Activated T-helper 2 cell treated with anti-CD3 and anti-CD28 coated beads, Interferon-gamma antibody, Interleukin-2, Interleukin-4, amounts not matched to agents 10 μg/mL and 5 μg/mL and 100 μg/mL, durations not matched to agents 14 hours and 24 hours and 36 hours (primary cell): ENCODE measurements at regions of chr4 and their contacts with region 1.

Region 1: DNA sequence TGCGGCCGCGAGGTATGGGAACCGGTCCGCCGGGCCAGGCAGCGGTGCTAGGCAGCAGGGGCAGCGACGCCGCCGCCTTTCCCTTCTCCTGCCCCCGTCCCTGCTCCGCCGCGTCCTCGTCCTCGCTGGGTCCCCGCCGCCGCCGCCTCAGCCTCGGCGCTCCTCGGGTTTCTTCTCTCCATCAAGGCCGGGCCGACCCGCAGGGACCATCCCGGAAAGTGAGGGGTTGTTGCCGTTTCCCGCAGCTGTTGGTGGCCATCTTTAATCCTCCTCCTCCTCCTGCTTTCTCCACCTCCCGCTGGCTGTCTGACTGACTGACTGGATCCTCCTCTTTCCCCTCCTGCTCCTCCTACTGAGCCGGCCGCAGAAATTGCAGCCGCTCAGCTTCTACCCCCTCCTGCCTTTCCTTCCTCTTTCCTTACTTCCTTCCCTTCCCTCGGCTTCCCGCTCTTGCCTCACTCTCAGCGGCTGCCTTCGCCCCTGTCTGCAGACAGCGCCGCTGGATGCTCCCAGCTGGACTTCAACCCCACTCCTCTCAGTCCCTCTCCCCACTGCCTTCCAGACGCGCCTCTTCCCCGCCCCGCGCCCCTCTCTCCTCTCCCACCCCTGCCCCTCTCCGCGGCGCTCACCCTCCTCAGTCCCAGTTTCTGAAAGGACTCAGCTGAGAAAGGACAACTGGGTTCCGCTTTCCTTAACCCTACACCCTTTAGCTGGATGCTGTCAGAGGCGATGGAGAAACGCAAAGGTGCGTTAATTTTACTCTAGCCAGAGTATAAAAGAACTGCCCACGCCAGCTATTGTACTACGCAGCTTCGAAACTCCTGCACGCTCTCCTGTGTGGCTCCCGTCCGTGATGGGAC is at the start of gene WDFY3:
- DNase-seq: no peak
- H3K4me3 Mint-ChIP-seq: peak within 1 kb of the TSS; percentile 65
- H3K27ac Mint-ChIP-seq: no peak within 1 kb of the TSS
- H3K4me1 Mint-ChIP-seq: peaks cover 7% of the 10 kb centered on the region
- H3K27me3 Mint-ChIP-seq: peaks cover 33% of the 10 kb centered on the region
- total RNA-seq, gene WDFY3: 0.48 and 0.80 TPM in 2 replicates

Region 2: DNA sequence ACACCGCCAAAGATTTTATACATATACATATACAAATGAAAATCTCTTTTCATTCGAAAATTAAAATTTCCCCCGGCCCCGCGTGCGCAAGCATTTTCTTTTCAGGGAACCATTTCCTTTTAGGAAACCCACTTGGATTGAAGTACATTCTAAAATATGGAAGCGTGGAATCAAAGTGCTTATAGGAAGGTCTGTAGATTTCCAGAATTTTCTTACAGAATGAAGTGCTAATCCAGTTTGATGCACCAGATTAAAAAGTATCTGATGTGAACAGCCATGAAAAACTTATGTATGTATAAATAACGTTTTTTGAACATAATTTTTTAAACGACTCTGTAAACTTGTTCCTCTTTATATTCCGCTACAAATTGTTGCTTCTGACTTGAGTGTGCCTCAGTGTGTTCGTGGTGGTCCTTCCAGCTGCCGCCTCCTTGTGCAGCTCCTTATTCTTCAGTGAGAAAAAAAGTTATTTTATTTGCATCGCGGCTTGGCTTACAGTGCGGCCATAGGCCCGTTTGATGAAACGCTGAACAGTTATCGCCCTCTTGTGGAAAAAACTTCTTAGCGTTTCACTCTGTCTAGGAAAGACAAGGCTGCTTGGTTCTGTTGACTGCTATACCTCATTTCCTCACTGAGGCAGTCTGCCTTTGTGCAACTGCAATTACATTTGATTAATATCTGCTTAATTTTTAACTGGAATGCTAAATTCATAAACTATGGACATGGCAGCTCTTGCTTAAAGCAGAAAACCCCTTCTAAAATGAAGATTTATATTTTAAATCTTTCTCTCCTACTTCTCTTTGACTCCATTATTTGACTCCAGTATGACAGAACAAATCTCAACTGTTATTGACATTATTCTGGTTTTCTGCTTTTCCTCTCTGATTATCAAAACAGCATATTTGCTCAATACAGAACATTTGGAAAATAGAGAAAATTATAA is 462.8 kb before region 1 on chr4:
- intact Hi-C with region 1: loop called (anchors 5 kb)
- DNase-seq: no peak
- H3K4me3 Mint-ChIP-seq: no peak overlapping the region
- H3K27ac Mint-ChIP-seq: no peak overlapping the region
- H3K4me1 Mint-ChIP-seq: peaks cover 3% of the 10 kb centered on the region
- H3K27me3 Mint-ChIP-seq: peaks cover 75% of the 10 kb centered on the region

Region 3: DNA sequence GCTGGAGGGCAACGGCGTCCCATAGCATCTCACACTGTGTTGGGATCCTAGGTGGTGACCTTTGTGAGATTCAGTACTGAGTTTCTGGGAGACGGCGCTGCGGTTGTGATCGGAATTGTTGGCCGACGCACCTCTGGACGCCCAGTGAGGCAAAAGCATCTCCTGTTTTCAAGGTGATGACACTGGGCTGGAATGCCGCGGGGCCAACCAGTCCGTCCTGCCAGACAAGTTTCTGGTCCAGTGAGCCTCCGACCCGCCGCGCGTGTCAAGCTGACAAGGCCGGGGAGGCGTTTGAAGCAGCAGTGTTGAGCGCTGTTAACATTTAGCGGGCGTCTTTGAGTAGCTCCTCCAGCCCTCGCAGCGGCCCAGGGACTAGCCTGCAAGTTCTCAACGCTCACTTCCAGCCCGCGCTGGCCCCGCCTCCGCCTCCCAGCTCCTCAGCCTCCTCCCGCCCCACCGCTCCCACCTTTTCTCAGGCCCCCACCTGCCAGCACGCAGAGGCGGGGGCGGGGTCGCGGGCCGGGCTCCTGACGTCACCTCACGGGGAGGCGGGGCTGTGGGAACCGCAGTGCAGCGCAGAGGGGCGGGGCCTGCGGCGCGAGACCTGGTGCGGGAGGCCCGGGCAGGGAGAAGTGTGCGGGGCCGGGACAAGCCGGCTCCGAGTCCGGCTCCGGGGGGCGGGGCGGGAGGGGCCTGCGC is 384.2 kb before region 1 on chr4:
- intact Hi-C with region 1: loop called (anchors 5 kb)
- DNase-seq: peak; percentile 77
- H3K4me3 Mint-ChIP-seq: peak overlapping the region; percentile 64
- H3K27ac Mint-ChIP-seq: no peak overlapping the region
- H3K4me1 Mint-ChIP-seq: peaks cover 10% of the 10 kb centered on the region
- H3K27me3 Mint-ChIP-seq: peaks cover 54% of the 10 kb centered on the region

Region 4: DNA sequence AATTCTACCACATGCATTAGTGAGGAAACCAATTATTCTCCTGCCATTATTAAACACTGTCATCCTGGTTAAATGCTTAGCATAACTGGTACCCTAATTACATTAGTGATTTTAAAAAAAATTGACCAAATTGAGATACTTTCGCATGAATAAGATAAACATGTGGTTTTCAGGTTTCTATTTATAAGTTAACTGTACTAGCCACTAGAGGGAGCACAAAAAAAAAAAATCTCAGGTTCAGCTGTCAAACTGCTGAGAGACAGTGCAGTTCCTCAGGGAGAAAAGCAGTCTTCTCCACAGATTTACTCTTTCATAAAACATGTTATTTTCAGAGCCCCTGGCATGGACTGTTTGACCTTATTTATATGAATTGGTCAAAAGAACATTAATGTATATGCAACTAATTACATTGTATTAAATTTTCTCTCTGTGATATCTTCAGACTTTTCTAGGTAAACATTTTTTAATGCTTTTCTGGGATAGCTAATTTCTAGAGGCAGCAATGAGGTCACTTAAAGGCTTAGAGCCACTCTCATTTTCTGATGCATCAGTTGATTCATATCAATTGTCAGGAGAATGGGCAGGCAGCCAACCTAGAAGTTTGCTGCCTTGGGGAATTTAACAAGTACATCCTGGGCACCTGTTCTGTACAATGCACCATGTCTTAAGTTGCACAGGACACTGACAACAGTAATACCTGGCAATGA is 216.2 kb before region 1 on chr4:
- intact Hi-C with region 1: loop called (anchors 10 kb)
- DNase-seq: no peak
- H3K4me3 Mint-ChIP-seq: no peak overlapping the region
- H3K27ac Mint-ChIP-seq: no peak overlapping the region
- H3K4me1 Mint-ChIP-seq: no peaks in the 10 kb centered on the region
- H3K27me3 Mint-ChIP-seq: no peaks in the 10 kb centered on the region